ENCODE measurements at regions of chr6 and their contacts with region 1.

Region 1: GRCh38 chr6:109036574-109037294 is 57.9 kb downstream of the SESN1 start:
- DNase-seq: no peak
- ATAC-seq: no peak
- H3K4me3 Mint-ChIP-seq: no peak overlapping the region
- H3K27ac Mint-ChIP-seq: no peak overlapping the region
- H3K4me1 Mint-ChIP-seq: peaks cover 30% of the 10 kb centered on the region
- H3K27me3 Mint-ChIP-seq: no peaks in the 10 kb centered on the region

Region 2: DNA sequence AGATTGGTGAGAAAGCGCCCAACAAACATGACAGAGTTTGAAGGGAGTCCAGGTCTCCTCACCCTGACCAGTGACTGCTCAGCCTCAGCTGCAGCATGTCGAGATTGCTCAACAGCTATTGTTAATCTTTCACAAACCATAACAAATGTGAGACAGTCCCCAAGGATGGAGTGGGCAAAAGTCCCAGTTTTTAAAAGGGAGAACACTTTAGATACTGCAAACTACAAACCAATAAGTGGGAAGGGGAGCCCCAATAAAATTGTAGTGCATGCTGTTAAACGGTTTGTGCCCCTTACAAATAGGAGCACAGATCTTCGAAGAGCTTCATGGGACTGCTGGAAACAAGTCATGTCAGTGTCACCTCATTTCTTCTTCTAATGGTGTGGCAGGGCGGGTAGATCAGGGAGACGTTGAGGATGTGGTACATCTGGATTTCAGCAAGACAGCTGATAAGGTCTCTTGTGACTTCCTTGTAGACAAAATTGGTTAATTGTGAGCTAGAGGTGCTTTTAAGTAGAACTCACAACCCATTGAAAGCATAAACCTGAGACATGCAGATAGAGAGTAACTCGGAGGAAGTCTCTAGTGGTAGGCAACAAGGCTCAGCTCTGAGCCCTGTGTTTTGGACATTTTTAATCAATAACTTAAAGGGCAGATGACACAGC is 322.5 kb before region 1 on chr6:
- CTCF ChIA-PET with region 1: no interaction called
- POLR2A ChIA-PET with region 1: no interaction called
- intact Hi-C with region 1: no loop called
- DNase-seq: no peak
- ATAC-seq: no peak
- H3K4me3 Mint-ChIP-seq: no peak overlapping the region
- H3K27ac Mint-ChIP-seq: no peak overlapping the region
- H3K4me1 Mint-ChIP-seq: peaks cover 10% of the 10 kb centered on the region
- H3K27me3 Mint-ChIP-seq: no peaks in the 10 kb centered on the region

Region 3: GRCh38 chr6:108760126-108761050 is 276.3 kb before region 1 on chr6:
- CTCF ChIA-PET with region 1: no interaction called
- POLR2A ChIA-PET with region 1: interaction called, 14 read pairs
- intact Hi-C with region 1: no loop called
- DNase-seq: no peak
- ATAC-seq: no peak
- H3K4me3 Mint-ChIP-seq: no peak overlapping the region
- H3K27ac Mint-ChIP-seq: no peak overlapping the region
- H3K4me1 Mint-ChIP-seq: no peaks in the 10 kb centered on the region
- H3K27me3 Mint-ChIP-seq: peaks cover 4% of the 10 kb centered on the region